Left colon (tissue), 2 donors: ENCODE measurements at regions of chr7 and their contacts with region 1.

Region 1: DNA sequence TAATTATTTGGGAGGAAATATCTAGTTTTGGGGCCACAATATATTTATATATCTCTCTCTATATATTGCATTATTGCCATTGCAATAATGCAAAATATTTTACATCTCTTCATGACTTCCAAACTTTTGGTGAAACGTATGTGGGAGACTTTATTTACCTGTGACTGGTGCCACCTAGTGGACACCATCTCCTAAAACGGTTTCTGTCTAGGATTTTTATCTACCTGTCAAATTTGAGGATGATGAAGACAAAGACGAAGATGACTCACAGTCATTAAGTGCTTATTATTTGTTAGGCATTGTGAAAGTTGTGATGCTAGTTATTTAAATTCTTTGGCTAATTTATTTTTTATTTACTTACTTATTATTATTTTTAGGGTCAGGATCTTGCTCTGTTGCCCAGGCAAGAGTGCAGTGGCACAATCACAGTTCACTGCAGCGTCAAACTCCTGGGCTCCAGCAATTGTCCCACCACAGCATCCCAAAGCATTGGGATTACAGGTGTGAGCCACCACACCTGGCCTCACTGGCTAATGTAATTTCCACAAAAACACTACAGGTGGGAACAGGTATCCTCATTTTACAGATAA is 18.7 kb upstream of the CBLL1 start:
- DNase-seq: peak in 1 of 2 donors; percentile 64
- ATAC-seq: peak; percentile 45

Region 2: GRCh38 chr7:107462740-107463444 is 262.4 kb before region 1 on chr7:
- intact Hi-C with region 1: loop called in 1 of 2 experiments (anchors 5 kb)
- DNase-seq: peak; percentile 34 to 59
- ATAC-seq: peak; percentile 95